ENCODE measurements at regions of chr11 and their contacts with region 1.

Region 1: GRCh38 chr11:32583459-32584271 is at the start of gene EIF3M:
- DNase-seq: peak; percentile 98
- ATAC-seq: peak; percentile 99
- H3K4me3 Mint-ChIP-seq: peak within 1 kb of the TSS; percentile 87
- H3K27ac Mint-ChIP-seq: peak within 1 kb of the TSS; percentile 96
- H3K4me1 Mint-ChIP-seq: peaks cover 39% of the 10 kb centered on the region
- H3K27me3 Mint-ChIP-seq: no peaks in the 10 kb centered on the region
- total RNA-seq, gene EIF3M: 392 to 408 TPM

Region 2: DNA sequence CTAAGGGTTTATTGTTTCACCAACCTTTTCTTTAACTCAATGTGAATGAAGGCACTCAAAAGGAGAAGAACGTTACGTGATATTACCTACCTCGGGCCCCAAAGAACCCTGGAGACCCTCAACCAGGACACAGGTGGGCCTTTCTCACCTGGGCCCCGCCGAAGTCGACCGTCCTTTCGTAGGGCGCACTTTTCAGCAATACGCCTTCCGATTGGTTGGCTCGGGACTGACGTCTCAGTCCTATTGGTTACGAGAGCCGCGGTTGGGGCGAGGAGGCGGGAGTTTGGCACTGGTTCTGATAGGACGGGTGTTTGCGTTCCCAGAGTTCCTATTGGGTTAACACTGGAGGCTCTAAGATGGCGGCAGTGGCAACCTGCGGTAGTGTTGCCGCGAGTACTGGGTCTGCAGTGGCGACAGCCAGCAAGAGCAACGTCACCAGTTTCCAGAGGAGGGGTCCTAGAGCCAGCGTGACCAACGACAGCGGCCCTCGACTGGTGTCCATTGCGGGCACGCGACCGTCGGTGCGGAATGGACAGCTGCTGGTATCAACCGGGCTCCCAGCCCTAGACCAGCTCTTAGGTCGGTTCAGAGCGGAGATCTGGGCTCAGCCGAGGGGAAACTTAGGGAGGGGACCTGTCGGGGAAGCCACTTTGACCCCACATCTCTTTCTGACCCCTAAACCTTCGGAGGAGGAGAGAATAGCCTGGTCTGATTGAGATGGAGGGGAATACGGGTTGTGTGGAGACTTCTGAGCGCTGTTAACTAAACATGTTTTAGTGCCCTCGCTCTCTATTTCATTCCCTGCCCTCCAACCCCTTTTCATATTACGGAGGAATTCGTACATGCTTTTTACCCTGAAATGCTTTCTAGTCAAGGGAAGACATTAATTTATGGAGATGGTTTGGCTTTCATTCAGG is 1074.0 kb before region 1 on chr11 and contains the starts of genes ELP4 and IMMP1L:
- CTCF ChIA-PET with region 1: no interaction called
- POLR2A ChIA-PET with region 1: no interaction called
- intact Hi-C with region 1: loop called in 1 of 2 experiments (anchors 5 kb)
- DNase-seq: peak; percentile 97
- ATAC-seq: peak; percentile 100
- H3K4me3 Mint-ChIP-seq: peak within 1 kb of the TSS; percentile 98
- H3K27ac Mint-ChIP-seq: peak within 1 kb of the TSS; percentile 88
- H3K4me1 Mint-ChIP-seq: peaks cover 36% of the 10 kb centered on the region
- H3K27me3 Mint-ChIP-seq: no peaks in the 10 kb centered on the region
- total RNA-seq, gene ELP4: 21.9 to 30.9 TPM
- total RNA-seq, gene IMMP1L: 18.8 to 21.0 TPM

Region 3: DNA sequence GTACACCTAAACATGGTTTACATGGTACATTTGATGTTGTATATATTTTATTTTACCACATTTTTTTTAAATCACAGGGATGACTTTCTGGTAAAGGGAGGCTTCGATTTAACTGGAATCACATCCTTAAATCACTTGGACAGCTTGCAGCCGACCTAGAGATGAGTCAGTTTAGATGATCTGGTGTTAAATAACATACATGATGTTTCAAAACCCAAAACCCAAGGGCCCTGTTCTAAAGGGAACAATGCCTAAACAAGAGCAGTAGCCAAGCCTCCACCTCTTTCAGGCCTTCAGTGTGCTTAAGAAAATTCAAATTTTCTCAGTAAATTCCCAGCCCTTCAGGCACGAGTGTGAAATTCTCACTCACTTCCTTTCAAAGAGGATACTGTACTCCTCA is 257.1 kb before region 1 on chr11:
- CTCF ChIA-PET with region 1: interaction called, 3 read pairs
- POLR2A ChIA-PET with region 1: no interaction called
- intact Hi-C with region 1: loop called in 1 of 2 experiments (anchors 10 kb)
- DNase-seq: no peak
- ATAC-seq: no peak
- H3K4me3 Mint-ChIP-seq: no peak overlapping the region
- H3K27ac Mint-ChIP-seq: no peak overlapping the region
- H3K4me1 Mint-ChIP-seq: no peaks in the 10 kb centered on the region
- H3K27me3 Mint-ChIP-seq: peaks cover 10% of the 10 kb centered on the region

Region 4: GRCh38 chr11:32549611-32550187 is 34.0 kb before region 1 on chr11:
- CTCF ChIA-PET with region 1: no interaction called
- POLR2A ChIA-PET with region 1: no interaction called
- intact Hi-C with region 1: no loop called
- DNase-seq: no peak
- ATAC-seq: no peak
- H3K4me3 Mint-ChIP-seq: no peak overlapping the region
- H3K27ac Mint-ChIP-seq: no peak overlapping the region
- H3K4me1 Mint-ChIP-seq: no peaks in the 10 kb centered on the region
- H3K27me3 Mint-ChIP-seq: no peaks in the 10 kb centered on the region

Region 5: GRCh38 chr11:32706949-32707736 is 123.5 kb after region 1 on chr11:
- CTCF ChIA-PET with region 1: no interaction called
- POLR2A ChIA-PET with region 1: no interaction called
- intact Hi-C with region 1: no loop called
- DNase-seq: no peak
- ATAC-seq: no peak
- H3K4me3 Mint-ChIP-seq: no peak overlapping the region
- H3K27ac Mint-ChIP-seq: no peak overlapping the region
- H3K4me1 Mint-ChIP-seq: peaks cover 10% of the 10 kb centered on the region
- H3K27me3 Mint-ChIP-seq: peaks cover 13% of the 10 kb centered on the region

Region 6: DNA sequence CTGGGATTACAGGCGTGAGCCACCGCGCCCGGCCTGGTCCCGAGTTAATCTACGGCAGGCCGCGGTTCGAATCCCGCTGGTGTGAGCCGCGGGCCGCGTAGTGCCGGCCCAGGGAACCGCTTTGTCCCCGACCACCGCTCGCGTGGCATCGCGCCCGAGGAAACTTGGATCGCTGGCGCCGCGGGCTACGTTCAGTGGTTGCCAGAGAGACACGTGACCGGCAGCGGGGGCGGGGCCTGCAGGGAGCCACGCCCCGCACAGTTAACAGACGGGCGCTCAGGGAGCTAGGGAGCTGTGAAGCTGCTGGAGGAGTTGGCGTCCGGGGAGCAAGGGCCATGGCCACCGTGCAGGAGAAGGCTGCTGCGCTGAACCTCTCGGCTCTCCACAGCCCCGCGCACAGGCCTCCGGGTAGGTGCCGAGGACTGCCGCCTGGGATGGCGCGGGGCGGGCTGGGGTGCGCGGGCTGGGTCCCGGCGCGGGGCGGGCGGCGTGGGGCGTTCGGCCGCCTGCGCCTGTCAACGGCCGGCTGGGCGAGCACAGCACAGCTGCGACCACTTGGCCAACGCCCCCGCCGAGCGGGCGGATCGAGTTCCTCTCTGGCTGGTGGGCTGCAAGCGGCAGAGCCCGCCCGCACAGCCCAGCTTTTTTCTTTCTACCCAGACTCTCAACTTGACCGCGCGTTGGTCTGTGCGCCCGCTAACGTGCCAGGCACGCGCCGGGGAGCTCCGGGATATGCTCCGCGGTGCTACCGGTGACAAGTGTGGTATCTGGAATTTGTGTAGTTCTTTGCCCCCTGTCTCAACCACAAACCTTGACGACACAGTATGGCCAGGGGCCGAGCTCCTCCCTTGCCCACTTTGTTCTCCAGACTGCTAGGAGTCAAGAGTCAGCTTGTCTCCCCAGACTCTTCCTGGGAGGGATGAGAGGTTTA is 432.2 kb after region 1 on chr11 and contains the start of gene DEPDC7:
- CTCF ChIA-PET with region 1: no interaction called
- POLR2A ChIA-PET with region 1: no interaction called
- intact Hi-C with region 1: loop called in 1 of 2 experiments (anchors 5 kb)
- DNase-seq: peak; percentile 90
- ATAC-seq: peak; percentile 81
- H3K4me3 Mint-ChIP-seq: peak within 1 kb of the TSS; percentile 75
- H3K27ac Mint-ChIP-seq: peak within 1 kb of the TSS; percentile 37
- H3K4me1 Mint-ChIP-seq: peaks cover 43% of the 10 kb centered on the region
- H3K27me3 Mint-ChIP-seq: peaks cover 29% of the 10 kb centered on the region
- total RNA-seq, gene DEPDC7: 2.0 to 2.3 TPM

Region 7: GRCh38 chr11:33161120-33162005 is 577.7 kb after region 1 on chr11 and contains the start of gene CSTF3:
- CTCF ChIA-PET with region 1: interaction called, 3 read pairs
- POLR2A ChIA-PET with region 1: no interaction called
- intact Hi-C with region 1: loop called (anchors 1 to 2 kb)
- DNase-seq: peak; percentile 99
- ATAC-seq: peak; percentile 97
- H3K4me3 Mint-ChIP-seq: peak within 1 kb of the TSS; percentile 96
- H3K27ac Mint-ChIP-seq: peak within 1 kb of the TSS; percentile 100
- H3K4me1 Mint-ChIP-seq: peaks cover 43% of the 10 kb centered on the region
- H3K27me3 Mint-ChIP-seq: no peaks in the 10 kb centered on the region
- total RNA-seq, gene CSTF3: 29.6 to 35.3 TPM

Measured in activated CD4-positive, alpha-beta T cell treated with anti-CD3 and anti-CD28 coated beads for 36 hours (primary cell).